ENCODE measurements at regions of chr5 and their contacts with region 1.

Region 1: DNA sequence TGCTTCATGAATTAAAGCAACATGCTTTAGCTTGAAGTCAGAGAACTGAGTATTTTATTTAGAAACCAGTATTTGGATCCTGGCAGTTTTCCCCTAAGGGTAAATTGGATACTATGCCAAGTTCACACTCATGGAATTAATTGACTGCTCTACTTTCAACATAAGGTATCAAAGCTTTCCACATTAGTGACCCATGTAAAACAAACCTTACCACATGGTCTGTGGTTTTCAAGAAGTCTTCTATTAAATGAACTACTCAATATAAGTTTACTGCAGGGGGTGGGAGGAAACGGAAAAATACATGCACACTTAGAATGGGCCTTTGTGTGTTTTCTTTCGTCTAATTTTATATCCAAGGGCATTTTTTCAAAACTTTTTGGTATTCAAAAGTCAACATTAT is 232.0 kb upstream of the FBXL7 start:
- DNase-seq: no peak
- H3K4me3 ChIP-seq: no peak overlapping the region
- H3K27ac ChIP-seq: no peak overlapping the region
- H3K4me1 ChIP-seq: no peaks in the 10 kb centered on the region
- H3K27me3 ChIP-seq: no peaks in the 10 kb centered on the region
- CTCF ChIP-seq: no peak
- EP300 ChIP-seq: no peak
- POLR2A ChIP-seq: no peak

Region 2: GRCh38 chr5:15334551-15335266 is 66.7 kb after region 1 on chr5:
- intact Hi-C with region 1: loop called in 1 of 4 experiments (anchors 2 kb)
- DNase-seq: no peak
- H3K4me3 ChIP-seq: no peak overlapping the region
- H3K27ac ChIP-seq: no peak overlapping the region
- H3K4me1 ChIP-seq: no peaks in the 10 kb centered on the region
- H3K27me3 ChIP-seq: no peaks in the 10 kb centered on the region
- CTCF ChIP-seq: no peak
- EP300 ChIP-seq: no peak
- POLR2A ChIP-seq: no peak

Region 3: DNA sequence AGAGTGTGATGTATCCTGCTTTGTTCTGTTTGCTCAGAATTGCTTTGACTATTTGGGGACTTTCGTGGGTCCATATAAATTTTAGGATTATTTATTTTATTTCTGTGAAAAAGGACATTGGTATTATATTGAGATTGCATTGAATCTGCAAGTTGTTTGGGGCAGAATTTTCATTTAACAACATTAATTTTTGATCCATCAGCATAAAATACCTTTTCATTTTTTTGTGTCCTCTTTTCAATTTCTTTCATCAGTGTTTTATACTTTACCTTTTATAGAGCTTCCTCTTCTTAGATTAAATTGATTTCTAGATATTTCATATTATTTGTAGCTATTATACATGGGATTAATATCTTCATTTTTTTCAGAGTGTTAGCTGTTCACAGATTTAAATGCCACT is 191.2 kb after region 1 on chr5:
- intact Hi-C with region 1: no loop called
- DNase-seq: no peak
- H3K4me3 ChIP-seq: no peak overlapping the region
- H3K27ac ChIP-seq: no peak overlapping the region
- H3K4me1 ChIP-seq: no peaks in the 10 kb centered on the region
- H3K27me3 ChIP-seq: no peaks in the 10 kb centered on the region
- CTCF ChIP-seq: no peak
- EP300 ChIP-seq: no peak
- POLR2A ChIP-seq: no peak

Region 4: GRCh38 chr5:15472116-15472515 is 204.2 kb after region 1 on chr5:
- intact Hi-C with region 1: no loop called
- DNase-seq: no peak
- H3K4me3 ChIP-seq: no peak overlapping the region
- H3K27ac ChIP-seq: no peak overlapping the region
- H3K4me1 ChIP-seq: peaks cover 2% of the 10 kb centered on the region
- H3K27me3 ChIP-seq: no peaks in the 10 kb centered on the region
- CTCF ChIP-seq: no peak
- EP300 ChIP-seq: no peak
- POLR2A ChIP-seq: no peak